ENCODE measurements at regions of chr9 and their contacts with region 1.

Region 1: GRCh38 chr9:132268725-132269352 is 85.9 kb downstream of the SETX start:
- DNase-seq: peak; percentile 82
- ATAC-seq: peak; percentile 80
- H3K4me3 Mint-ChIP-seq: no peak overlapping the region
- H3K27ac Mint-ChIP-seq: no peak overlapping the region
- H3K4me1 Mint-ChIP-seq: peaks cover 3% of the 10 kb centered on the region
- H3K27me3 Mint-ChIP-seq: no peaks in the 10 kb centered on the region

Region 2: GRCh38 chr9:131762356-131762932 is 506.4 kb before region 1 on chr9:
- CTCF ChIA-PET with region 1: interaction called, 12 read pairs
- POLR2A ChIA-PET with region 1: no interaction called
- DNase-seq: peak; percentile 75
- ATAC-seq: peak; percentile 92
- H3K4me3 Mint-ChIP-seq: no peak overlapping the region
- H3K27ac Mint-ChIP-seq: no peak overlapping the region
- H3K4me1 Mint-ChIP-seq: no peaks in the 10 kb centered on the region
- H3K27me3 Mint-ChIP-seq: peaks cover 22% of the 10 kb centered on the region

Region 3: GRCh38 chr9:132295181-132295580 is 26.3 kb after region 1 on chr9:
- CTCF ChIA-PET with region 1: interaction called, 14 read pairs
- POLR2A ChIA-PET with region 1: no interaction called
- DNase-seq: no peak
- ATAC-seq: no peak
- H3K4me3 Mint-ChIP-seq: no peak overlapping the region
- H3K27ac Mint-ChIP-seq: peak overlapping the region; percentile 48
- H3K4me1 Mint-ChIP-seq: peaks cover 15% of the 10 kb centered on the region
- H3K27me3 Mint-ChIP-seq: no peaks in the 10 kb centered on the region

Measured in activated CD8-positive, alpha-beta T cell treated with anti-CD3 and anti-CD28 coated beads, Interleukin-2, amount 10 ng/mL, durations not matched to agents 7 days and 5 days (primary cell).